Activated CD4-positive, alpha-beta T cell treated with anti-CD3 and anti-CD28 coated beads, Interleukin-2, amount 10 ng/mL, durations not matched to agents 24 days and 14 days (primary cell): ENCODE measurements at regions of chr11 and their contacts with region 1.

Region 1: GRCh38 chr11:108733479-108734116 is 68.7 kb downstream of the DDX10 start:
- DNase-seq: peak; percentile 72
- H3K4me3 Mint-ChIP-seq: peak overlapping the region; percentile 51
- H3K27ac Mint-ChIP-seq: peak overlapping the region; percentile 84
- H3K4me1 Mint-ChIP-seq: peaks cover 33% of the 10 kb centered on the region
- H3K27me3 Mint-ChIP-seq: no peaks in the 10 kb centered on the region

Region 2: GRCh38 chr11:106840947-106841346 is 1892.7 kb before region 1 on chr11:
- intact Hi-C with region 1: no loop called
- DNase-seq: no peak
- H3K4me3 Mint-ChIP-seq: no peak overlapping the region
- H3K27ac Mint-ChIP-seq: no peak overlapping the region
- H3K4me1 Mint-ChIP-seq: no peaks in the 10 kb centered on the region
- H3K27me3 Mint-ChIP-seq: no peaks in the 10 kb centered on the region

Region 3: GRCh38 chr11:107840129-107840484 is 893.5 kb before region 1 on chr11:
- intact Hi-C with region 1: loop called (anchors 2 kb)
- DNase-seq: no peak
- H3K4me3 Mint-ChIP-seq: peak overlapping the region; percentile 77
- H3K27ac Mint-ChIP-seq: peak overlapping the region; percentile 91
- H3K4me1 Mint-ChIP-seq: peaks cover 52% of the 10 kb centered on the region
- H3K27me3 Mint-ChIP-seq: no peaks in the 10 kb centered on the region

Region 4: GRCh38 chr11:108237058-108237481 is 496.5 kb before region 1 on chr11:
- intact Hi-C with region 1: loop called (anchors 5 kb)
- DNase-seq: peak; percentile 68
- H3K4me3 Mint-ChIP-seq: peak overlapping the region; percentile 63
- H3K27ac Mint-ChIP-seq: peak overlapping the region; percentile 87
- H3K4me1 Mint-ChIP-seq: peaks cover 51% of the 10 kb centered on the region
- H3K27me3 Mint-ChIP-seq: no peaks in the 10 kb centered on the region

Region 5: DNA sequence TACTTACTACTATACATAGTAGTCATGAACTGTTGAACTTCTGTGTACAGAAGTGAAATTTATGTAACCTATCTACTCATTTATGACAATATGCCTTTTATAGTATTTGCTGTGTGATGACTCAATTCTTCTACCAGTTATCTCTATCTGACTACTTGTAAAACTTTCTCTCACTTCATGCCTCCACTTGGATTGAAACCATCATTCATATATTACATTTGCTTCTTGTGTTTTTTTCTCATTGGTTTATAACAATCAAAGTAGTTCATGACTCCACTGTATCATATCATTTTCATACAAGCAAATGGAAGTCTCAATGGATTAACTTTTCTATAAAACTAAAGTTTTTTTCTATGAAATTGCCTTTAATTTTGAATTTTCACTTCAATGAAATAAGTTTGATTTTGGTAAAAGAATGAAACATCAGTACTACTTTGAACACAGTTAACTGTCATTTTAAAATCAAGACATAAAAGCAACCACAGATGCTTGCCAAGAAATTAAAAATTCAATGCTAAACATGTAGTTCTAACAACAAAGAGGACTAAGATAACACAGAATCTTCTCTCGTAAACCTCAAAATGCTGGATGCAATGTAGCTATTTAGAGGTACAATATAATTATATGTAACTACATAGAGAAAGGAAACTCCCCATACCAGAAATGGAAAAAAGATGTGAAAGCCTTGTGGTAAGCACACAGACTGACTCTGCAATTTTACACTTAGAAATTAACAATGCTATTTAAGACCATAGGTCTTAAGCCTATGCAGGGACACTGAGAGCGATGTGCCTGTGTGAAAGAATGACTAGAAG is 112.4 kb before region 1 on chr11:
- intact Hi-C with region 1: loop called (anchors 1 kb)
- DNase-seq: no peak
- H3K4me3 Mint-ChIP-seq: no peak overlapping the region
- H3K27ac Mint-ChIP-seq: peak overlapping the region; percentile 3
- H3K4me1 Mint-ChIP-seq: peaks cover 17% of the 10 kb centered on the region
- H3K27me3 Mint-ChIP-seq: peaks cover 17% of the 10 kb centered on the region

Region 6: DNA sequence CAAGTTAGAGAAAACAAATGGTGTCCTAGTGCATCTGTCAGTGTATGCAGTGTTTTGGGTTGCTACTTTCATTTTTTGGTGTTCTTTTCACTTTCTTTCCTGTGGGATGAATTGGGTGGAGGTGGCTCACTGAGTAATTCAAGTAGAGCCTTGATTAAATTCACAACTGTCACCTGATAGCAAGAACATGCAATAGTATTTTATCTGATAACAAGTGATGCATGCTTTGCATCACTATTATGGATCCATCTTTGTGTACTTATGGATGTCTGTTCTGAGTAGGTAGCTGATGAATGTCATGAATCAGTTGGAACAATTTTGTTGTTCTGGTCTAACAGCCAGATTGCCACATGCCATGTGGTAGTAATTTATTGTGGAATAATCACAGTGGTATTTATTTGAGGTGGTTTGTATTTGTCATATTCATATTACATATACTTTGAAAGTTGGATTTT is 18.7 kb after region 1 on chr11:
- intact Hi-C with region 1: loop called (anchors 1 kb)
- DNase-seq: no peak
- H3K4me3 Mint-ChIP-seq: no peak overlapping the region
- H3K27ac Mint-ChIP-seq: peak overlapping the region; percentile 1
- H3K4me1 Mint-ChIP-seq: peaks cover 16% of the 10 kb centered on the region
- H3K27me3 Mint-ChIP-seq: no peaks in the 10 kb centered on the region

Region 7: DNA sequence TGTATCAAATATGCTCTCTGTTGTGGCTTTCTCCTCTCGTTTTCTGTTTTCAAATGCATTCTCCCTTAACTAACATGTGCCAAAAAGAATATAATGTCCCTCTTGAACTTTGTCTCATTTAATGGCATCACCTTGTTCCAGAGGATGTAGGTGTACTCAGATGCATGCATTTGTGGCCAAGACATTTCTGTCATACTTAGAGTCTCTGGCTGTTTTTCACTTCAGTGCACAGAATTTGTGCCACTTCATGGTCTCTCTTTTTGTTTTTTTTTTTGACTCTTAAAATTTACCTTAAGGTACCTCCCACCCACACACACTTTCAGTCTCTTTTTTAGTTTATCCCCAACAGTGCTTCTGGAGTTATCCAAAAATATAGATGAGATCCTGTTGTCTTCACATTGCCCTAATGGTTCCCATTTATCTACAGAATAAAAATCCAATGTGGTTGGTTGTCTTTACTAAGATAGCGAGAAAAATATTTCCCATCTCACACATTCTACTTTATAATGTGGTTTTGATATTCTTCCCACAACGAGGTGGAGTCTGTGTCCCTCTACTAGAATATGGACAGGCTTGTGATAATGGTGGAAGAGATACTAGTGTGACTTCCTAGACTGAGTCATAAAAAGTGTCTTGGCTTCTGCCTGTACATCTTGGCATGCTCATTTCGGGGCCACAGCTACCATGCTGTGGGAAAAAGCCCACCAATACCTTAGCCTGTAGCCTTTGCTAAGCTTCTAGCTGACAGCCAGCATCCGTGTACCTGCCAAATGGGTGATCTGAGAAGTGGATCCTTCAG is 57.1 kb after region 1 on chr11:
- intact Hi-C with region 1: loop called (anchors 5 kb)
- DNase-seq: no peak
- H3K4me3 Mint-ChIP-seq: no peak overlapping the region
- H3K27ac Mint-ChIP-seq: peak overlapping the region; percentile 50
- H3K4me1 Mint-ChIP-seq: peaks cover 20% of the 10 kb centered on the region
- H3K27me3 Mint-ChIP-seq: no peaks in the 10 kb centered on the region

Region 8: DNA sequence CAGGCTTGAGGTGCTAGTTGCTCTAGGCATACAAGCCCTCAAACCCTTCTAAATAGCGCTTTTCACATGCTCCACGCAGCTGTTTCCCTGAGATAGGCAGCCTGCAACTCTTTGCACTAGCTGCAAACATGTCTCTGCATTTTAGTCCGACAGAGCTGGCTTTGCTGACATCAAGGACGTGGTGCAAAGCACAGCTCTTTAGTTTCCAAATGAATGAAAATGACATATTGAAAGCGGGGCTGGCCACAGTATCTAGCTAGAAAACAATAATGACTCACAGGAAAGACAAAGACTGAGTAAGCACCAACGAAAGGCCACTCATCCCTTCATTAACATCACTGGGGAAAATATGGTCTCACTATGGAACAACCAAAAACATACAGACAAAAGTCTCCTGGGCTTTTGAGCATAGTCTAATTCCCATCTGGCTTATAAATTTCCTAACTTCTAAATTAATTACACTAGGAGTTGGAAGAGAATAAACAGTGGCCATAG is 1344.3 kb after region 1 on chr11:
- intact Hi-C with region 1: loop called (anchors 10 kb)
- DNase-seq: peak; percentile 80
- H3K4me3 Mint-ChIP-seq: peak overlapping the region; percentile 43
- H3K27ac Mint-ChIP-seq: peak overlapping the region; percentile 95
- H3K4me1 Mint-ChIP-seq: peaks cover 26% of the 10 kb centered on the region
- H3K27me3 Mint-ChIP-seq: peaks cover 5% of the 10 kb centered on the region